Activated T-helper 1 cell treated with anti-CD3 and anti-CD28 coated beads, Interleukin-12 subunit alpha, Interleukin-12 subunit beta, Interleukin-2, Interleukin-4 antibody, amounts not matched to agents 30 ng/mL and 10 ng/mL and 1 ng/mL, durations not matched to agents 14 hours and 24 hours and 36 hours (primary cell): ENCODE measurements at regions of chr17 and their contacts with region 1.

Region 1: GRCh38 chr17:40139566-40140058 is 725 bp upstream of the CASC3 start:
- DNase-seq: no peak
- H3K4me3 Mint-ChIP-seq: peak overlapping the region; percentile 98
- H3K27ac Mint-ChIP-seq: peak overlapping the region; percentile 98
- H3K4me1 Mint-ChIP-seq: peaks cover 34% of the 10 kb centered on the region
- H3K27me3 Mint-ChIP-seq: peaks cover 2% of the 10 kb centered on the region

Region 2: GRCh38 chr17:39972271-39972670 is 167.3 kb before region 1 on chr17:
- intact Hi-C with region 1: no loop called
- DNase-seq: no peak
- H3K4me3 Mint-ChIP-seq: no peak overlapping the region
- H3K27ac Mint-ChIP-seq: no peak overlapping the region
- H3K4me1 Mint-ChIP-seq: no peaks in the 10 kb centered on the region
- H3K27me3 Mint-ChIP-seq: peaks cover 20% of the 10 kb centered on the region

Region 3: DNA sequence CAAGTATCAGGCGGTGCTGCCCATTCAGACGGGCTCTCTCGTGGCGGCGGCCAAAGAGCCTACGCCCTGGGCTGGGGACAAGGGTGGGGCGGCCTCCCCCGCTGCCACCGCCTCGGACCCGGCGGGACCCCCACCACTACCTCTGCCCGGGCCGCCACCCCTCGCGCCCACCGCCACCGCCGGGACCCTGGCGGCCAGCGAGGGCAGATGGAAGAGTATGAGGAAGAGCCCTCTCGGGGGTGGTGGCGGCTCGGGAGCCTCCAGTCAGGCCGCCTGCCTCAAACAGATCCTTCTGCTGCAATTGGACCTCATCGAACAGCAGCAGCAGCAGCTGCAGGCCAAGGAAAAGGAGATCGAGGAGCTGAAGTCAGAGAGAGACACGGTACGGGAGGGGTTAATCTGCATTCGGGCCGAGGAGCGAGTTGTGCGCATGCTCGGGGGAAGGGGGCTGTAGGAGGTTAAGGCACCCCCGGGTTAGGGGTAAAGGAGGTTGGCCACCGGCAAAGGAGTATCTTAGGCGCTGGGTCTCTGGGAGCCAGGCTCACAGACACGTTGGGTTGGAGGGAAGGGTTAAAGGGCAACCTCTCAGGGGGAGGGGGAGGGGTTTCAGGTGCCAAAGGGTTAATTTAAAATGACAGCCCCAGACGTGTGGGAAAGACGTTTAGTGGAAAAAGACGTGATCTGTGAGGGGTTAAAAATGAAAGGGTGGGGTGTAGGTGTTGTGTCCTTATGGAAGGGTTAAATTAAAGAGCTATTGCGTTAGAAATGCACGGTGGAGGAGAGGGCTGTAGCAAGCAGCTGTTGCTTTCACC is 16.4 kb before region 1 on chr17:
- intact Hi-C with region 1: loop called (anchors 1 kb)
- DNase-seq: peak; percentile 55
- H3K4me3 Mint-ChIP-seq: peak overlapping the region; percentile 97
- H3K27ac Mint-ChIP-seq: peak overlapping the region; percentile 94
- H3K4me1 Mint-ChIP-seq: peaks cover 40% of the 10 kb centered on the region
- H3K27me3 Mint-ChIP-seq: no peaks in the 10 kb centered on the region

Region 4: DNA sequence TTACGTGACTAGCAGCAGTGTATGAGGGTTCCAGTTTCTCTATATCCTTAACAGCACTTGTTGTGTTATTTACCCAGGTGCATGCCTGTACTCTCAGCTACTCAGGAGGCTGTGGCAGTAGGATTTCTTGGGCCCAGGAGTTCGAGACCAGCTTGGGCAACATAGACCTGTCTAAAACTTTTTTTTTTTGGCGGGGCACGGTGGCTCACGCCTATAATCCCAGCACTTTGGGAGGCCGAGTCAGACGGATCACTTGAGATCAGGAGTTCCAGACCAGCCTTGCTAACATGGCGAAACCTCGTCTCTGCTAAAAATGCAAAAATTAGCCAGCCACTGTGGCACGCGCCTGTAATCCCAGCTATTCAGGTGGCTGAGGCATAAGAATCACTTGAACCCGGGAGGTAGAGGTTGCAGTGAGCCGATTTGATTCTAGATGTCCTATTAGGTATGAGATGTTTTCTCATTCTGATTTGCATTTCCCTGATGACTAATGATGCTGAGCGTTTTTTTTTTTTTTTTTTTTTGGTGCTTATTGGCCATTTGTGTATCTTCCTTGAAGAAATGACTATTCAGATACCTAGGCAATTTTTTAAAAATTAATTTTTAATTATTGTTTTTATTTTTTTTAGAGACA is 14.1 kb after region 1 on chr17:
- intact Hi-C with region 1: loop called (anchors 1 kb)
- DNase-seq: no peak
- H3K4me3 Mint-ChIP-seq: no peak overlapping the region
- H3K27ac Mint-ChIP-seq: peak overlapping the region; percentile 98
- H3K4me1 Mint-ChIP-seq: peaks cover 51% of the 10 kb centered on the region
- H3K27me3 Mint-ChIP-seq: no peaks in the 10 kb centered on the region

Region 5: DNA sequence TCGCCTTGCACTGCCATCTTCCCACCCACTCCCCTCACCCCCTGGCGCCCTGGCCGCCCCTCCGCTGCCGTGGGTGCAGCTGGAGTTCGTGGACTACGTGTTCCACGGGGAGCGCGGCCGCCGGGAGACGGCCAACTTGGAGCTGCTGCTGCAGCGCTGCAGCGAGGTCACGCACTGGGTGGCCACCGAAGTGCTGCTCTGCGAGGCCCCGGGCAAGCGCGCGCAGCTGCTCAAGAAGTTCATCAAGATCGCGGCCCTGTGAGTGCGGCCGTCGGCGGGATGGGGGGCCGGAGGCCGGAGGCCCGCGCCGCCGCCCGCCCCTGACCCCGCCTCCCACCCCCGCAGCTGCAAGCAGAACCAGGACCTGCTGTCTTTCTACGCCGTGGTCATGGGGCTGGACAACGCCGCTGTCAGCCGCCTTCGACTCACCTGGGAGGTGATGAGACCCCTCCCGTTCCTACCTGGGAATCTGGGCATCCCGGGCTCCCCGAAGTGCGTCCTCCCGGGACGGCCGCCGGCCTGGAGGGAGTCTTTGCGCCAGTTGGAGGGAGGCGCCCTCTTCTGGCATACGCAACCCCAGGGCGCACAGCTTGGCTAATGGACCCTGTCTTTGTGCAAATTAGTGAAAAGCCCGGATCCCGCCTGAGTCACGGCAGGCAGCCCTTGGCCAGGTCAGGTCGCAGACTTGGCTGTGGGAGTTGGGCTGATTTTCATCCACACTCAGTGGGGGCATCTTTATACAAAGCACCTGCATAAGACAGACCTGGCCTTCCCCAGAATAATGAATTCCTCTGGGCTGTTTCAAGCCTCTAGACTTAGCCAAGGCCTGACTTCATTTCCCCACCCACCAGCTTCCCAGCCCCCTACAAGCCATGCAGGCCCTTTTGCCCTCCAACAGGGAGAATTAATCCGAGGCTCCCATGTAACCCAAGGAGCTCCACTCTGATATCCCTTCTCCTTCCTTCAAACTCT is 51.9 kb after region 1 on chr17:
- intact Hi-C with region 1: no loop called
- DNase-seq: peak; percentile 53
- H3K4me3 Mint-ChIP-seq: peak overlapping the region; percentile 92
- H3K27ac Mint-ChIP-seq: peak overlapping the region; percentile 79
- H3K4me1 Mint-ChIP-seq: peaks cover 16% of the 10 kb centered on the region
- H3K27me3 Mint-ChIP-seq: peaks cover 2% of the 10 kb centered on the region